OCI-LY7 (cell line): ENCODE measurements at regions of chr2 and their contacts with region 1.

Region 1: DNA sequence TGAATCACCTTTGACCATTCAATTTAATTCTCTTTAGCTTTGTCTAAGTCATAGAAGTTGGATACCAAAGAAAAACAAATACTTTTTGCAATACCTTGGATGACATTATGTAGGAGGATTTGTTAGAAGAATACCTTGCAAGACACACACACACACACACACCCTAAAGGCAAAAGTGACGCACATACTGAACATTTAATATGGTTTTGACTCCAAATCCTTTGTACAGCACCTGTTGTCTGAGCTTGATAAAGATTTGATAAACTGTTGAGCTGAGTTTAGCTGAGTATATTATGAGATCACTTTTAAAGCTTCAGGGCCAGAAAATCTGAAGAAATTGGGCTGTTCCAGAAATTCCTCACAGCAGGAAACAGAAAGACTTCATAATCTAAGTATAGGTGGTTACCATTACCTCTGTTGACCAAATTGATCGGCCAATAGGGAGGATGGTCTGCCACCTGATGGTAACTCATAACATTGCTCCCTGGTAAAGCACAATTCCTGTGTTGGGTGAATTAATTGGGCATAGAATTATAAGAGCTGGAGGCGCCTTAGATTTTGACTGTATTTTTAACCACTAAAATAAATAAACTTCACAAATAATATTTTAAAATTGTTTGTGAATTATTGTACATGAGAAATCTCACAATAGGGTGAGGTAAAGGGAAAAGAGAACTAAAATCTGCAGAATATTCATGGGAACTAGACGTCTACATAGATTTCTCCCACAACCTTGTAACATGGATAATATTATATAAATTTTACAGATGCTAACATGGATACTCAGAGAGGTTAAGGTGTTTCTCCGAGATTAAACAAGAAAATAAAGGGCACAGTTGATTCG is 21.9 kb upstream of the RPIA start:
- DNase-seq: peak; percentile 74
- H3K4me3 ChIP-seq: no peak overlapping the region
- H3K27ac ChIP-seq: no peak overlapping the region
- H3K4me1 ChIP-seq: no peaks in the 10 kb centered on the region
- CTCF ChIP-seq: peak; percentile 98

Region 2: GRCh38 chr2:88212251-88212790 is 457.3 kb before region 1 on chr2:
- CTCF ChIA-PET with region 1: no interaction called
- POLR2A ChIA-PET with region 1: no interaction called
- intact Hi-C with region 1: no loop called
- DNase-seq: peak; percentile 11
- H3K4me3 ChIP-seq: no peak overlapping the region
- H3K27ac ChIP-seq: no peak overlapping the region
- H3K4me1 ChIP-seq: no peaks in the 10 kb centered on the region
- CTCF ChIP-seq: peak; percentile 70

Region 3: GRCh38 chr2:88481691-88482338 is 187.8 kb before region 1 on chr2:
- CTCF ChIA-PET with region 1: no interaction called
- POLR2A ChIA-PET with region 1: no interaction called
- intact Hi-C with region 1: loop called (anchors 10 kb)
- DNase-seq: peak; percentile 7
- H3K4me3 ChIP-seq: no peak overlapping the region
- H3K27ac ChIP-seq: no peak overlapping the region
- H3K4me1 ChIP-seq: no peaks in the 10 kb centered on the region
- CTCF ChIP-seq: no peak

Region 4: DNA sequence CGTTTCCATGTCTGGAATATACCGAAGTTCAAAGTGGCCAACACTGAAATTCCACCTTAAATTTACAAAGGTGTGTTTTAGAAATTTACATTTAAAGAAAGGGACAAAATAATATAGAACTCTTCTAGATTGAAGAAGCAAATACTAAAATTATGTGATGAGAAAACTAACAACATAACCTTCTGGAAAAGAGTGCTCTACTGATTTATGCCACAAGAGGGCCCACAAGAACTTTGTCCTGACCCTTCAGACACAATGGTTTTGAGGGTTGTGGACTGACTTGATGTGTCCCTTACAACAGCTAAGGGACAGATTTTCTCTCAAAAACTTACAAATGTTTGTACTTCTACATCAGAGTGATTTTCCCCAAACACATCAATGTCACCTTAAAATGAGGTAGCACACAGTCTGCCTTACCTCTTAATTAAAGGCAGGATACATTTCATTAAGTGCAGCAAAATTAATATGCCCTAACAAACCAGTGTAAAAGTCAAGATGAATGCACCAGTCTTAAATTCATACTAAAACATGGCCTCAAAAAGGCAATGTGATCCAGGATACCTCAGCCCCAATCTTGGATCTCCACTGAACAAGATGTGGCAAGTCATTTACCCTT is 78.5 kb before region 1 on chr2:
- CTCF ChIA-PET with region 1: interaction called, 5 read pairs
- POLR2A ChIA-PET with region 1: interaction called, 5 read pairs
- intact Hi-C with region 1: loop called (anchors 1 kb)
- DNase-seq: peak; percentile 84
- H3K4me3 ChIP-seq: no peak overlapping the region
- H3K27ac ChIP-seq: peak overlapping the region; percentile 32
- H3K4me1 ChIP-seq: peaks cover 25% of the 10 kb centered on the region
- CTCF ChIP-seq: peak; percentile 98

Region 5: GRCh38 chr2:88874063-88874657 is 204.6 kb after region 1 on chr2:
- CTCF ChIA-PET with region 1: no interaction called
- POLR2A ChIA-PET with region 1: no interaction called
- intact Hi-C with region 1: loop called (anchors 5 kb)
- DNase-seq: peak; percentile 72
- H3K4me3 ChIP-seq: no peak overlapping the region
- H3K27ac ChIP-seq: no peak overlapping the region
- H3K4me1 ChIP-seq: peaks cover 37% of the 10 kb centered on the region
- CTCF ChIP-seq: peak; percentile 87